Panc1 (cell line): ENCODE measurements at regions of chr12 and their contacts with region 1.

Region 1: DNA sequence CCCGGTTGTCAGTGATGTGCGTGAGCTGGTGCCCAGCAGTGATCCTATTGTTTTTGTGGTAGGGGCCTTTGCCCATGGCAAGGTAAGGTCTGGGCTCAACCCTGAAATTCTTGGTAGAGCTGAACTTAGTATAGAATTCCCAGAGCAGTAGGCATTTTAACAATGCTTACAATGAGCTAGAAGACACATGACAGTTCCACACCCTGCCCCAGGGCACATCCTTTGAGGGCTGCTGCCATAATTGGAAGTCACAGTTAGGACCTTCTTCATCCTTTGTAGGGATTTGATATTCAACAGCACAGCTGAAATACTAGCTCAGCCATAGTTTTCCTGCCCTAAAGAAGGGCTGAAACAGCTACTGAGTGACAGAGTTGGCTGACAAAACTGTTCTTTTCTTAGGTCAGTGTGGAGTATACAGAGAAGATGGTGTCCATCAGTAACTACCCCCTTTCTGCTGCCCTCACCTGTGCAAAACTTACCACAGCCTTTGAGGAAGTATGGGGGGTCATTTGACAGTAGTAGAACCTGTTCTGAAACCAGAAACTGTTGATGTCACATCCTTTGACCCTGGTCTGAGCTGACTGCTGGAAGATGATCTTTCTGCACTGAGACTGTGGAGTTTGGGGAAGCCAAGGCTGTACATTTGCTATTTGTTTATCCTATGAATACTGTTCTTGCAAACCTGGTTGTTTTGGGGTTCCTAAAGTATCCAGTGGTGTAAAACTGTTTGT is 4.7 kb downstream of the EMG1 start:
- DNase-seq: no peak
- ATAC-seq: no peak
- H3K4me3 ChIP-seq: no peak overlapping the region
- H3K27ac ChIP-seq: no peak overlapping the region
- H3K4me1 ChIP-seq: peaks cover 9% of the 10 kb centered on the region
- H3K27me3 ChIP-seq: no peaks in the 10 kb centered on the region
- CTCF ChIP-seq: no peak

Region 2: DNA sequence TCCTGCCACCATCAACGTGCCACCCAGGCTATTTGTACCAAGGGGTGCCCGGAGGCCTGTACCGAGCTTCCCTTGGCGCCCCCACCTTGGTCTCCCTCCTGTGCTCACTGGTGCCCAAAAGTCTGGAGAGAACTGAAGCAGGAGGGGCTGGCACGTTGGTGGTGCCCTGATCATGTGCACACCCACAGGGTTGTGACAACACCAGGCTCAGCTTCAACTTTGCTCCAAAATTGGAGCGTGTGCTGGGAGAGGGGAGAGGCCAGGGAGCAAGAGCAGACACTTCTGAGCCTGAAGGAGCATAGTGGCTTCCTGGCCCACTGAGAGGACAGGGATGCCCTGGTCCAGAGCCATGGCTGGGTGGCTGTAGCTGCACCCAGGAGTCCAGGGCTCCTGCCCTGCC is 55.8 kb after region 1 on chr12:
- CTCF ChIA-PET with region 1: no interaction called
- POLR2A ChIA-PET with region 1: interaction called, 10 read pairs
- in situ Hi-C with region 1: no loop called
- intact Hi-C with region 1: no loop called
- DNase-seq: no peak
- ATAC-seq: no peak
- H3K4me3 ChIP-seq: no peak overlapping the region
- H3K27ac ChIP-seq: no peak overlapping the region
- H3K4me1 ChIP-seq: no peaks in the 10 kb centered on the region
- H3K27me3 ChIP-seq: no peaks in the 10 kb centered on the region
- CTCF ChIP-seq: no peak